Transverse colon (tissue), 4 donors: ENCODE measurements at regions of chr18 and their contacts with region 1.

Region 1: GRCh38 chr18:37805773-37806404 is 240.3 kb upstream of the CELF4 start:
- DNase-seq: no peak
- H3K4me3 ChIP-seq: no peak overlapping the region
- H3K27ac ChIP-seq: no peak overlapping the region
- H3K4me1 ChIP-seq: no peaks in the 10 kb centered on the region
- H3K27me3 ChIP-seq: no peaks in the 10 kb centered on the region
- CTCF ChIP-seq: no peak
- EP300 ChIP-seq: no peak
- POLR2A ChIP-seq: no peak

Region 2: GRCh38 chr18:37836071-37836970 is 30.4 kb after region 1 on chr18:
- in situ Hi-C with region 1: no loop called
- intact Hi-C with region 1: loop called (anchors 2 kb)
- DNase-seq: no peak
- H3K4me3 ChIP-seq: no peak overlapping the region
- H3K27ac ChIP-seq: no peak overlapping the region
- H3K4me1 ChIP-seq: no peaks in the 10 kb centered on the region
- H3K27me3 ChIP-seq: no peaks in the 10 kb centered on the region
- CTCF ChIP-seq: no peak
- EP300 ChIP-seq: no peak
- POLR2A ChIP-seq: no peak